IMR-90 (cell line): ENCODE measurements at regions of chr1 and their contacts with region 1.

Region 1: GRCh38 chr1:154863315-154864174 is 6.5 kb downstream of the KCNN3 start:
- DNase-seq: peak; percentile 75
- ATAC-seq: peak; percentile 71
- H3K4me3 ChIP-seq: no peak overlapping the region
- H3K27ac ChIP-seq: no peak overlapping the region
- H3K4me1 ChIP-seq: peaks cover 20% of the 10 kb centered on the region
- H3K27me3 ChIP-seq: peaks cover 34% of the 10 kb centered on the region
- CTCF ChIP-seq: peak; percentile 71
- POLR2A ChIP-seq: no peak
- RAD21 ChIP-seq: peak; percentile 57

Region 2: GRCh38 chr1:154765970-154766369 is 97.6 kb before region 1 on chr1:
- CTCF ChIA-PET with region 1: no interaction called
- POLR2A ChIA-PET with region 1: no interaction called
- dilution Hi-C with region 1: no loop called
- in situ Hi-C with region 1: no loop called
- intact Hi-C with region 1: loop called (anchors 5 kb)
- DNase-seq: peak; percentile 34
- ATAC-seq: peak; percentile 56; the same call in 1 of the 2 replicates
- H3K4me3 ChIP-seq: no peak overlapping the region
- H3K27ac ChIP-seq: no peak overlapping the region
- H3K4me1 ChIP-seq: peaks cover 4% of the 10 kb centered on the region; the same call in 1 of the 2 replicates
- H3K27me3 ChIP-seq: peaks cover 49% of the 10 kb centered on the region
- CTCF ChIP-seq: peak; percentile 44
- POLR2A ChIP-seq: no peak
- RAD21 ChIP-seq: peak; percentile 32; the same call in 1 of the 2 replicates

Region 3: GRCh38 chr1:154837672-154838171 is 25.8 kb before region 1 on chr1:
- CTCF ChIA-PET with region 1: no interaction called
- POLR2A ChIA-PET with region 1: no interaction called
- dilution Hi-C with region 1: no loop called
- in situ Hi-C with region 1: no loop called
- intact Hi-C with region 1: no loop called
- DNase-seq: no peak
- ATAC-seq: no peak
- H3K4me3 ChIP-seq: no peak overlapping the region
- H3K27ac ChIP-seq: no peak overlapping the region
- H3K4me1 ChIP-seq: peaks cover 10% of the 10 kb centered on the region; the same call in 1 of the 2 replicates
- H3K27me3 ChIP-seq: peaks cover 54% of the 10 kb centered on the region
- CTCF ChIP-seq: no peak
- POLR2A ChIP-seq: no peak
- RAD21 ChIP-seq: no peak

Region 4: DNA sequence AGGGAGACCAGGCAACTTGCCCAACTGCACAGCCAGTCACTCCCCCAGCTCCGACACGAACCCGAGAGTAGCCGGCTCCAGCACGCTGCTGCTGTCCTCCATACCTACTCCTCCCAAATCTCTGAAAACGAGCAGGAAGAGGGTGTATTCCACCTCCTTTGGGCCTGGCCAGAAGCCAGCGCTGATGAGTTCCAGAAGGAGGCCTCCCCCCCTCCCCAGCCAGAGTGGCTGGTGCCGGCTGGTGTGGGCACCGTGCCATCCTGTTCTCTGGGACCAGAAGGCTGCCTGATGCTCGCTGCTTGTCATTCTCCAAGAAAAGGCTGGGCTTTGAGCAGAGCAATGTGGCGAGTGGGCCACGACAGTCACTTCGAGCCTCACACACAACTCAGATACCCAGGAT is 15.7 kb before region 1 on chr1:
- CTCF ChIA-PET with region 1: interaction called, 13 read pairs
- POLR2A ChIA-PET with region 1: interaction called, 6 read pairs
- dilution Hi-C with region 1: no loop called
- in situ Hi-C with region 1: no loop called
- intact Hi-C with region 1: no loop called
- DNase-seq: no peak
- ATAC-seq: no peak
- H3K4me3 ChIP-seq: no peak overlapping the region
- H3K27ac ChIP-seq: no peak overlapping the region
- H3K4me1 ChIP-seq: no peaks in the 10 kb centered on the region
- H3K27me3 ChIP-seq: peaks cover 50% of the 10 kb centered on the region
- CTCF ChIP-seq: no peak
- POLR2A ChIP-seq: no peak
- RAD21 ChIP-seq: no peak